ENCODE measurements at regions of chr16 and their contacts with region 1.

Region 1: GRCh38 chr16:28943281-28943680 is 7.5 kb upstream of the NFATC2IP start:
- DNase-seq: no peak
- H3K4me3 Mint-ChIP-seq: no peak overlapping the region
- H3K27ac Mint-ChIP-seq: no peak overlapping the region
- H3K4me1 Mint-ChIP-seq: peaks cover 7% of the 10 kb centered on the region
- H3K27me3 Mint-ChIP-seq: no peaks in the 10 kb centered on the region

Region 2: DNA sequence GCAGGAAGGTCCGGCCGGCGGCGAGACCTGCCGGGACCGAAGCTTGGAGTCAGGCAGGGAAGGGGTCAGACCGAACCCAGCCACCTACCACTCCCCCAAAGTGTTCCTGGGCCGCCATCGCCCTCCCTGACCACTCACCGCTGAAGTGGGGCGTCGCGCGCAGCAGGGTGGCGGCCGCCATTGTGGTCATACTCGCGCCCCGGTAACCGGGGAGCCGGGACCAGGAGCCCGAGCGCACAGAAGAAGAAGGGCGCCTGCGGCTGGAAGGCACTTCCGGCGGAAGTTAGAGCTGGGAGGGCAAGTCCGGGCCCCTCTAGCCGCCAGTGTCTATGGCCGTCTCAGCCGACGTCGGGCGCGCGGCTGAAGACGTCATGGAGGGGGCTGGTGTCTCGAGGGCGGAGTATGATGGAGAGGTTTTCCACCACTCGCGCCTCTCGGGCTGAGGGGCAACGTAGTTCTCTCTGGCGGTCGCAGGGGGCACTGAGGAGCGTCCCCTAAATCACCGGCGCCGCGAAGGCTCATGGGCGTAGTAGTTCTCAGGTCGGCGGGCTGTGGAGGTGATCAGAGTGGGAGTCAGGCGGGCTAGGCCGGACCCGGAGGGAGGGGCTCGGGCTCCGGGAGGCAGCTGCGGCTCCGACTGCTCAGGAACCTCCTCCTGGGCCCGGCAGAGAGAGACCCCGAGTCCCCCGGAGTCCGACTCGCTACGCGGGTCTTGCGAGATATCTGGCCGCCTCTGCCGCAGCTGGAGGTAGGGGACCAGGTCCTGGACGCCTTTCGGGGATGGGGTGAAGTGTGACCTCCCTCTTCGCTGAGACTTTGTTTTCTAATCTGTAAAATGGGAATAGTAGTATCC is 97.0 kb before region 1 on chr16 and contains the start of gene TUFM:
- CTCF ChIA-PET with region 1: interaction called, 17 read pairs
- intact Hi-C with region 1: no loop called
- DNase-seq: peak; percentile 98
- H3K4me3 Mint-ChIP-seq: peak within 1 kb of the TSS; percentile 98
- H3K27ac Mint-ChIP-seq: peak within 1 kb of the TSS; percentile 96
- H3K4me1 Mint-ChIP-seq: peaks cover 28% of the 10 kb centered on the region
- H3K27me3 Mint-ChIP-seq: no peaks in the 10 kb centered on the region
- total RNA-seq, gene TUFM: 276 to 289 TPM

Region 3: GRCh38 chr16:28873536-28874201 is 69.6 kb before region 1 on chr16:
- CTCF ChIA-PET with region 1: interaction called, 26 read pairs
- intact Hi-C with region 1: no loop called
- DNase-seq: peak; percentile 62
- H3K4me3 Mint-ChIP-seq: no peak overlapping the region
- H3K27ac Mint-ChIP-seq: no peak overlapping the region
- H3K4me1 Mint-ChIP-seq: peaks cover 5% of the 10 kb centered on the region
- H3K27me3 Mint-ChIP-seq: no peaks in the 10 kb centered on the region